ENCODE measurements at regions of chr7 and their contacts with region 1.

Region 1: GRCh38 chr7:138214926-138215325 is 138.7 kb downstream of the AKR1D1 start:
- DNase-seq: no peak
- H3K4me3 ChIP-seq: no peak overlapping the region
- H3K27ac ChIP-seq: no peak overlapping the region
- H3K4me1 ChIP-seq: no peaks in the 10 kb centered on the region
- H3K27me3 ChIP-seq: no peaks in the 10 kb centered on the region
- CTCF ChIP-seq: no peak

Region 2: DNA sequence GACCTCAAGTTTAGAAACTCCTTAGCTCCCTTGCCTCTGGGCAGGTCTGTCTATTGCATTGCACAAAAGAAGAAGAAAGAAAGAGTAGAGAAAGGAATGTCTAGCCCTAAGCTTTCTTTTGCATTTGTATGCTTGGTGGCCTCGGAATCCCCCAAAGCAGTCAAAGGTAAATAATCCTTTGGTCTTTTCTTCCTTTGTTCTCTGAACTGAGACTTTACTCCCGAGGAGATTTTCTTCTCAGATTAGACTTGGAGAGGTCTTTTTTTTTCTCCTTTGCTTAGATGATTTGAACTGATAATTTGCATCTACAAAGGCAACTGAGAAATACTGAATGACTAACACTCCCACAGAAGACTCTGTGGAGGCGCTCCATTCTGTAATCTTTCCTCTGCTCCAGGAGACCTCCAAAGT is 45.5 kb before region 1 on chr7:
- CTCF ChIA-PET with region 1: no interaction called
- dilution Hi-C with region 1: loop called (anchors 5 kb)
- in situ Hi-C with region 1: no loop called
- intact Hi-C with region 1: no loop called
- DNase-seq: no peak
- H3K4me3 ChIP-seq: no peak overlapping the region
- H3K27ac ChIP-seq: no peak overlapping the region
- H3K4me1 ChIP-seq: no peaks in the 10 kb centered on the region
- H3K27me3 ChIP-seq: no peaks in the 10 kb centered on the region
- CTCF ChIP-seq: no peak

Measured in mammary epithelial cell (primary cell).